Pancreas (tissue), 10 donors: ENCODE measurements at regions of chr19 and their contacts with region 1.

Region 1: DNA sequence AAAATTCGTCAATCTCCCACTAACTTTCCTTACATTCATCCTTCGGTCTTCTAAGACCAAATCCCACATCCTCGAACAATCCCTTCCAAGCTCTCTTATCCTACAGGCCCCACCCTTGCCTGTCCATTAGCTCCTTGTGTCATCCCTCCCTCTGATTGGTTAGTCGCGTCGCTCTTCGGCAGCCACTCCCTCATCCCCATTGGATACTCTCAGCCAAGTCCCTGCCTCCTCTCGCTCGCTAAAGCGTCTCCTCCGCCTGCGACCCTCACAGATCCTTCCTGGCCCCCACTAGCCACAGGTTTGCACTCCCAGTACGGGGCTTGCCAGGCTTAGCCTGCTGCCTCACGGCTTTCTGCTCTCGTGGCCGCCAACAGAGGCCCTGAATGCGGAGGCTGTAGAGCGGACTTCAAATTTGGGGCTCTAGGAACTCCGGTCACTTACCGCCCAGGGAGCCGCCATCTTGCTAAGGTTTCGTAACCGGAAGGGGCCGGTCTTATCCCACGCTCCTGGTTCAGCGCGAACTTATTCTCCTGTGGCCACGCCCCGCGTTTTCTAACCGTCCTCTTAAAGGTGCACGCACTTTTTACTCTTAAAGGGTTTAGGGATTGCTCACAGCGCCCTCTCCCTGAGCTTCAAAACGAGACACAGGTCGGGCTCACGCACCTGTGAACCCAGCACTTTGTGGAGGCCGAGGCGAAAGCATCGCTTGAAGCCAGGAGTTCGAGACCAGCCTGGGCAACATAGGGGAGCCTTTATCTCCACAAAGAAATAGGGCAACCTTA is at the start of gene DMAC2:
- DNase-seq: peak; percentile 91 to 97 (median 96)
- ATAC-seq: peak; percentile 97 to 99 (median 98)
- H3K4me3 ChIP-seq: peak within 1 kb of the TSS; percentile 62 to 95 (median 84)
- H3K27ac ChIP-seq: peak within 1 kb of the TSS; percentile 75 to 92 (median 84)
- H3K4me1 ChIP-seq: peaks cover 0 to 6% (median 4%) of the 10 kb centered on the region in 3 donors
- H3K27me3 ChIP-seq: no peaks in the 10 kb centered on the region
- CTCF ChIP-seq: peak in 2 of 4 donors; percentile 18 to 28
- total RNA-seq, gene DMAC2: 16.2 to 25.5 (median 24.7) TPM

Region 2: DNA sequence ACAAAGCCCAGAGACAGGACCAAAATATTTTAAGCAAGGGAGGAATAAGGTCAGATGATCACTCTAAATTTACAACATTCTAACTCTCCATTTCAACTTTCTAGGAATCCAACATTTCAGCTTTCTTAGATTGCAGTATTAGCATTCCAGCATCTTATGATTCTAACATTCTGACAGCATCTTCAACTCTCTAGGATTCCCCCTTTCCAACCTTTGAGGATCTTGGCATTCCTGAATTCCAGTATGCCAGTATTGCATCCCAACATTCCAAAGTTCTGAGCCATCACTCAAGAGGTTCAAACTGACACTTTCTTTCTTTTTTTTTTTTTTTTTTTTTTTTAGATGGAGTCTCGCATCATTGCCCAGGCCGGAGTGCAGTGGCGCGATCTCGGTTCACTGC is 99.7 kb before region 1 on chr19:
- intact Hi-C with region 1: loop called in 1 of 3 experiments (anchors 10 kb)
- DNase-seq: no peak
- ATAC-seq: no peak
- H3K4me3 ChIP-seq: no peak overlapping the region
- H3K27ac ChIP-seq: no peak overlapping the region
- H3K4me1 ChIP-seq: no peaks in the 10 kb centered on the region
- H3K27me3 ChIP-seq: no peaks in the 10 kb centered on the region
- CTCF ChIP-seq: no peak

Region 3: GRCh38 chr19:41570639-41571112 is 131.0 kb after region 1 on chr19:
- intact Hi-C with region 1: loop called in 1 of 3 experiments (anchors 10 kb)
- DNase-seq: peak; percentile 50 to 95 (median 82)
- ATAC-seq: peak; percentile 84 to 99 (median 95)
- H3K4me3 ChIP-seq: no peak overlapping the region
- H3K27ac ChIP-seq: no peak overlapping the region
- H3K4me1 ChIP-seq: no peaks in the 10 kb centered on the region
- H3K27me3 ChIP-seq: peaks cover 0 to 36% (median 4%) of the 10 kb centered on the region in 4 donors
- CTCF ChIP-seq: peak; percentile 80 to 85 (median 83)